Aorta (tissue), 5 donors: ENCODE measurements at regions of chr17 and their contacts with region 1.

Region 1: GRCh38 chr17:47239619-47240374 is 13.8 kb upstream of the ITGB3 start:
- DNase-seq: peak; percentile 92 to 94
- ATAC-seq: peak; percentile 90
- H3K4me3 ChIP-seq: no peak overlapping the region
- H3K27ac ChIP-seq: peak overlapping the region; percentile 50 to 73
- H3K4me1 ChIP-seq: peaks cover 0 to 3% of the 10 kb centered on the region in 2 donors
- H3K27me3 ChIP-seq: no peaks in the 10 kb centered on the region

Region 2: GRCh38 chr17:47188876-47189731 is 50.7 kb before region 1 on chr17 and contains the start of gene CDC27:
- intact Hi-C with region 1: no loop called
- DNase-seq: peak; percentile 100
- ATAC-seq: peak; percentile 99
- H3K4me3 ChIP-seq: peak within 1 kb of the TSS; percentile 56 to 78
- H3K27ac ChIP-seq: peak within 1 kb of the TSS; percentile 0 to 72
- H3K4me1 ChIP-seq: peaks cover 0 to 4% of the 10 kb centered on the region in 2 donors
- H3K27me3 ChIP-seq: no peaks in the 10 kb centered on the region
- total RNA-seq, gene CDC27: 100 to 123 TPM

Region 3: DNA sequence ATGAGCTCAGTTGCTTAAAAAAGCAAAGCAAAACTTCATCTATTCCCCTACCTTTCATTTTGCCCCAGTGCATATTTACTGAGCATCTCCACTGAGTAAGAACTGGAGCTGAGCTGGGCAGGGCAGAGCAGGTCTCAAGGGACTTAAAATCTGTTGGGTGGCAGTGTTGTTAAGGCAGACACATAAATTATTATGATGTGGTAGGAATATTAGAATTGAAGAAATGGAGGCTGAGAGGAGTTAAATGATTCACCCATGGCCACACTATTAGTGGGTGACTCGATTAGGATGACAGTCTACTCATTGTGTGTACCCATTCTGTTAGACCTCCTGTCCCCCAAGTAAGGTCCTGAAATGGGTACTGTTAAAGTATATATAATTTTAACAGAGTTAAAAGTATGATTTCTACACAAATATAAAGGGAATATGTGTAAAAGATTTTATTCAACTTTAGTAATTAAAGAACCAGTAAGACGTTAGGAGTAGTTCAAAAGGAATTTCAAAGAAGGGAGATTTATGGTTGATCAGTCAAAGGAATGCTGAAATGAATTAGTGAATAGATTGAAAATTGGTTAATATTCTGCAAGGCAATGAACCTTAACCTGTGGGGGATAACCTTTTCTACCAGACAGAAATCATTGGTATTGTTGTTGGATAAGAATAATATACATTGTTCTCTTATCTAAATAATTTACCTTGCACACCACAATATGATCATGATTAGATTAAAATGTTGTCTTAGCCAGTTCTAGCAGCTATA is 31.3 kb after region 1 on chr17:
- intact Hi-C with region 1: loop called (anchors 5 kb)
- DNase-seq: no peak
- ATAC-seq: no peak
- H3K4me3 ChIP-seq: no peak overlapping the region
- H3K27ac ChIP-seq: peak overlapping the region in 1 of 2 donors; percentile 38
- H3K4me1 ChIP-seq: peaks cover 4 to 8% of the 10 kb centered on the region in 2 donors
- H3K27me3 ChIP-seq: no peaks in the 10 kb centered on the region

Region 4: DNA sequence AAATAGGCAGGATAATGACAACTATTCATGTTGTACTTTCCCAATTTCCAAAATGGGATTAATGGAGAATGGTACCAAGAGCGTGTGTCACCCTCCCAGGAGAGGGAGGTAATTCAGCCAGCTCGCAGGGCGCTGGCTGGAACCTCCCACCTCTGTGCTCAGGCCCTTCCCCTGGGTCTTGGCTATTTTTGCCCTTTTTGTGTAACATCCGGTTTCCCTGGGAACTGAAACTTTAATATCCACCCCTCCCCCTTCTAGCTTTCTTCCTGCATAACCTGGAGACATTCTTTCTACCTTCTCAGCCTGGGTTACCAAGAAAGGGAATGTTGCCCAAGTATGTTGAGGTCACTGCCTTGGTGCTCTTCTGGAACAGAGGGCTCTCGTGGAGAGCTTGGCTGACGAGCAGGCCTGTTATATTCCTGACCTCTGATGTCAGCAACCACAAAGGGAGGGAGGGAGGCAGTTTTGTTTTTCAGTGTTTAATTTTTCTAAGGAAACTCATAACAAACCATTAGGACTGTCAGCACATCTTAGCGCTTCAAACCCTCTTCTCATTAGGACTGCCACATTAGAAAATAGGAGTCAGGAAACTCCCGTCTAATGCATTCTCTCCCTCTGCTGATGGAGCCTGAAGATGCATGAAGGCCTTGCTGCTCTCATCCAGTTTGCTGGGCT is 39.4 kb after region 1 on chr17:
- intact Hi-C with region 1: loop called (anchors 5 kb)
- DNase-seq: peak; percentile 88 to 90
- ATAC-seq: peak; percentile 88
- H3K4me3 ChIP-seq: no peak overlapping the region
- H3K27ac ChIP-seq: peak overlapping the region; percentile 91 to 100
- H3K4me1 ChIP-seq: peaks cover 5 to 15% of the 10 kb centered on the region in 2 donors
- H3K27me3 ChIP-seq: no peaks in the 10 kb centered on the region

Region 5: DNA sequence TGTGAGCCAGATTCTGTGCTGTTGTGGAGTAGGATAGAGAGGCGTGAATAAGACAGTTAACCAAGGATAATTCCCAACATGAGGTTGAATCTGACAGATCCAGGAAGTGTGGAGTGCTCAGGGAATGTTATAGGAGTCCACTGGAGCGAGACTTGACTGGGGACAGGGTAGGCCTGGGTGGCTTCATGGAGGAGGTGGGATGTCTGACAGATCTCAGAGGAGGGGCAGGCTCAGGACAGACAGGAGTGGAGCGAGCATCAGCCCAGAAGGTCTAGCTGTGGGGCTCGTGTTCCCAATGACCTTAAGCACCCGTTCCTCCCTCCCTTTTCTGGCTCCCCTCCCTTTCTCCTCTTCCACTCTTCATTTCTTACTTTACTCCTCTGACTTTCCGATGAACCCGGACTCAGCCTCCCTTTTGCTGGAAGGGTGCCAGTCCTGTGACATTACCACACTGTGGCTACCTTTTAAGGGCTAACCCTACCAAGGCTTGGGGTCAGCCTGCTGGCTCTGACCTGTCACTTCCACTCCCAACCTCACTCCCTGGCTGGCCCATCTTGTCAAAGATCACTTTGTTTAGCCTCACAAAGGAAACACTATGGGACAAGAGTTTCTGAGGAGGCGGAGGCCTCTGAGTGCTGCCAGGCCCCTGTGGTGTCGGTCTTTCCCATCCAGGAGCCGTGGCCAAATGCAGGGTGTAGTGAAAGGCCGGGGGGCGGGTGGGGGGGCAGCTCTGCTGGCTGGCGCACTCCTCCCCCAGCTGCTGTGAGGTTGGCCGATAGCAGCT is 55.5 kb after region 1 on chr17:
- intact Hi-C with region 1: loop called in 1 of 2 experiments (anchors 5 kb)
- DNase-seq: no peak
- ATAC-seq: peak; percentile 2
- H3K4me3 ChIP-seq: no peak overlapping the region
- H3K27ac ChIP-seq: peak overlapping the region; percentile 58 to 86
- H3K4me1 ChIP-seq: peaks cover 0 to 9% of the 10 kb centered on the region in 2 donors
- H3K27me3 ChIP-seq: no peaks in the 10 kb centered on the region

Region 6: DNA sequence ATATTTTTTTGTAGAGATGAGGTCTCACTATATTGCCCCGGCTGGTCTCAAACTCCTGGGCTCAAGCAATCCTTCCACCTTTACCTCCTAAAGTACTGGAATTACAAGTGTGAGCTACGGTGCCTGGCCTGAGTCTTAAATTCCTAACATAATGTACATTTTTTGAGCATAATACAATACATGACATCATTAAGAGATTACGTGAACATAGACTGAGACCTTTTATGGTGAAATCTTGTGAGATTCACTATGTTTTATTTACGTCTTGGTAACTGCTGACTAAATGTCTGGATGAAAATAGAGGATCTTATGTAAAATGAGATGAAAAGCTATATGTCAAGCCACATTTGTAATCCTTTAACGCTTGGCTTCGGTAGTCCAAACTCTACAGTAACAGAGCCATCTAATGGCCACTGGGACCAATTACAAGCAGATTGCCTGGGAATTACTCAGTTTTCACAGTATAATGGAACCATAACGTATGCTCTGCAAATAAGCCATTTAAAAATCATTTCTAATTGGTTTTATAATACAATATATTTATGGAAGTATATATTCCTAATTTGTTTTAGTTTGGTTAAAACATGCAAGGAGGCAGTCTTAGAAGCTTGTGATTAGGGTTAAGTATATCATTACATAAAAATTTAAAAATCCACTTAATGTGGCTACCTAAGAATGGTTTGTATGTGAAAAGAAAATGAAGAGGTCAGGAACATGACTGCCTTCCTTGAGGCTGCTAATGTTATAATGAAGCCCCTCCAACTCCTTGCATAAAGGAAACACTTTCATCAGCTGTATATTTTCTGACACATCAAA is 75.9 kb after region 1 on chr17:
- intact Hi-C with region 1: loop called in 1 of 2 experiments (anchors 5 kb)
- DNase-seq: no peak
- ATAC-seq: peak; percentile 86
- H3K4me3 ChIP-seq: no peak overlapping the region
- H3K27ac ChIP-seq: peak overlapping the region; percentile 60 to 91
- H3K4me1 ChIP-seq: peaks cover 0 to 6% of the 10 kb centered on the region in 2 donors
- H3K27me3 ChIP-seq: no peaks in the 10 kb centered on the region

Region 7: GRCh38 chr17:47388825-47389224 is 149.0 kb after region 1 on chr17:
- intact Hi-C with region 1: no loop called
- DNase-seq: no peak
- ATAC-seq: no peak
- H3K4me3 ChIP-seq: no peak overlapping the region
- H3K27ac ChIP-seq: no peak overlapping the region
- H3K4me1 ChIP-seq: no peaks in the 10 kb centered on the region
- H3K27me3 ChIP-seq: no peaks in the 10 kb centered on the region